H1 (cell line): ENCODE measurements at regions of chr1 and their contacts with region 1.

Region 1: DNA sequence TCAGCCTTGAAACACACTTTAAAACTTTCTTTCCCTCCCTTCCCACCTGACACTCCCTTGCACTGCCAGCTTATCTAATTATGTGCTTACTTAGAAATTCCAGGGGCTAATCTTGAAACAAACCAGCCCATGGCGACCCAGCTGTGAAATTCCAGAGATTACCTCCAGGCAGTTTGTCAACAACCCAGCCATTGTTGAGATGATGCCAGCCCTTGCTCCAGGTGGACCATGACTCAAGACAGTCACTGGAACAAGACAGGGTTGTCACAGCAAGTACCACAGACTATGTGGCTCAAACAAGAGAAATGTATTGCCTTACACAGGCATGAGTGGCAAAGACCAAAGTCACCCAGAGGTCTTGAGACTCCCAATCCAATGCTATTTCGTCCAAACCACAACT is 7.9 kb downstream of the FYB2 start:
- DNase-seq: no peak
- H3K4me3 ChIP-seq: no peak overlapping the region
- H3K27ac ChIP-seq: no peak overlapping the region
- H3K4me1 ChIP-seq: no peaks in the 10 kb centered on the region
- H3K27me3 ChIP-seq: no peaks in the 10 kb centered on the region
- CTCF ChIP-seq: no peak
- EP300 ChIP-seq: no peak
- POLR2A ChIP-seq: no peak
- RAD21 ChIP-seq: no peak

Region 2: GRCh38 chr1:56780826-56781225 is 30.5 kb before region 1 on chr1:
- CTCF ChIA-PET with region 1: interaction called, 13 read pairs
- POLR2A ChIA-PET with region 1: no interaction called
- DNase-seq: no peak
- H3K4me3 ChIP-seq: no peak overlapping the region
- H3K27ac ChIP-seq: no peak overlapping the region
- H3K4me1 ChIP-seq: no peaks in the 10 kb centered on the region
- H3K27me3 ChIP-seq: no peaks in the 10 kb centered on the region
- CTCF ChIP-seq: peak in 2 of 3 experiments; percentile 26 to 37; a peak in 3 of 4 replicates
- EP300 ChIP-seq: no peak
- POLR2A ChIP-seq: no peak
- RAD21 ChIP-seq: peak in 1 of 2 experiments; percentile 25; a peak in 1 of 4 replicates

Region 3: DNA sequence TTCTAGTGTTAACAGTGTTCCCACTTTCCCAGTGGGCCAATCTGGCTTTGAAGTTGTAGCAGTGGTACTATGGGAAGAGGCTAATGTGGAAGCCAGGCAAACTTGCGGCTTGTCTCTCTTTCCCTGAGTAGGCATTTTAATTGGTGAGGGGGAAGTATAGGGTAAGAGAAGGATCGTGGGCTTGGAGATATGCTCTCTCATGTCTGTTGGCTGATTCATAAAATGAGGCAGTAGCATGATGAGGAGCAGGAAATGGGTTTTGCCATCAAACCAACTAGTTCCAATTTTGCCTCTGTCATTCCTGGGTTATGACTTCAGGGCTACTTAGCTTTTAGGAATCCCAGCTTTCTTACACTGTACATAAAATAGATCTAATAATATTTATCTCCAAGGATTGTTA is 55.3 kb after region 1 on chr1:
- CTCF ChIA-PET with region 1: no interaction called
- POLR2A ChIA-PET with region 1: no interaction called
- DNase-seq: no peak
- H3K4me3 ChIP-seq: no peak overlapping the region
- H3K27ac ChIP-seq: no peak overlapping the region
- H3K4me1 ChIP-seq: no peaks in the 10 kb centered on the region
- H3K27me3 ChIP-seq: no peaks in the 10 kb centered on the region
- CTCF ChIP-seq: no peak
- EP300 ChIP-seq: no peak
- POLR2A ChIP-seq: no peak
- RAD21 ChIP-seq: no peak